Heart left ventricle (tissue), 16 donors: ENCODE measurements at regions of chr11 and their contacts with region 1.

Region 1: GRCh38 chr11:1943977-1944376 is 3.2 kb upstream of the MRPL23 start:
- DNase-seq: peak in 4 of 5 donors; percentile 6 to 54 (median 22)
- ATAC-seq: no peak
- H3K4me3 ChIP-seq: no peak overlapping the region
- H3K27ac ChIP-seq: peak overlapping the region in 8 of 12 donors; percentile 11 to 68 (median 32)
- H3K4me1 ChIP-seq: peaks cover 0 to 18% (median 4%) of the 10 kb centered on the region in 12 donors
- H3K27me3 ChIP-seq: no peaks in the 10 kb centered on the region
- CTCF ChIP-seq: no peak
- POLR2A ChIP-seq: no peak

Region 2: GRCh38 chr11:1889224-1890120 is 54.5 kb before region 1 on chr11:
- intact Hi-C with region 1: loop called in 4 of 10 experiments (anchors 1 to 10 kb)
- DNase-seq: peak in 3 of 5 donors; percentile 30 to 84 (median 41)
- ATAC-seq: peak in 2 of 4 donors; percentile 7 to 25
- H3K4me3 ChIP-seq: peak overlapping the region in 1 of 12 donors; percentile 16
- H3K27ac ChIP-seq: peak overlapping the region in 1 of 12 donors; percentile 71
- H3K4me1 ChIP-seq: peaks cover 0 to 32% (median 0%) of the 10 kb centered on the region in 12 donors
- H3K27me3 ChIP-seq: no peaks in the 10 kb centered on the region
- CTCF ChIP-seq: no peak
- POLR2A ChIP-seq: no peak

Region 3: DNA sequence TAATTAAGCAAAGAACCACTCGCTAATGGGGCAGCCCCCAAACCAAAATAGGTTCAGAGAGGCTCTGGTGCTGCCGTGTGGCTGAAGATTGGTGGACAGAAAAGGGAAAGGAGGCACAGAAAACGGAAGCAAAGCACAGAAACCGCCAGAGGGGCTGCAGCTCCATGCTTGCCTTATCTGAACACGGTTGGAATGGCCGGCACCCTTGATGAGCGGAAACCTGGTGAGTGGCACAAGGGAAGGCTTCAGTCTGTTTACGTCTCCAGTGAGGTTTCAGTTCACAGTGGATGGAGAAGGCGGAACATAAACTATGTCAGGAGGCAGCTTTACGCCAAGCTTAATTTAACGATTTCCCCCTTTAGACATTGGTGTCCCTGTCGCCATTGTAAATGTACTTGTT is 47.1 kb before region 1 on chr11:
- intact Hi-C with region 1: loop called in 6 of 10 experiments (anchors 1 to 10 kb)
- DNase-seq: peak in 1 of 5 donors; percentile 33
- ATAC-seq: peak in 1 of 4 donors; percentile 29
- H3K4me3 ChIP-seq: peak overlapping the region in 4 of 12 donors; percentile 10 to 42 (median 14)
- H3K27ac ChIP-seq: peak overlapping the region in 2 of 12 donors; percentile 6 to 14
- H3K4me1 ChIP-seq: peaks cover 0 to 18% (median 0%) of the 10 kb centered on the region in 12 donors
- H3K27me3 ChIP-seq: no peaks in the 10 kb centered on the region
- CTCF ChIP-seq: no peak
- POLR2A ChIP-seq: no peak

Region 4: GRCh38 chr11:1912289-1912878 is 31.6 kb before region 1 on chr11:
- intact Hi-C with region 1: loop called in 5 of 10 experiments (anchors 1 kb)
- DNase-seq: peak in 3 of 5 donors; percentile 13 to 48 (median 29)
- ATAC-seq: no peak
- H3K4me3 ChIP-seq: no peak overlapping the region
- H3K27ac ChIP-seq: peak overlapping the region in 10 of 12 donors; percentile 21 to 88 (median 64)
- H3K4me1 ChIP-seq: peaks cover 1 to 48% (median 26%) of the 10 kb centered on the region in 12 donors
- H3K27me3 ChIP-seq: no peaks in the 10 kb centered on the region
- CTCF ChIP-seq: no peak
- POLR2A ChIP-seq: no peak